Adrenal gland (tissue), 19 donors: ENCODE measurements at regions of chr14 and their contacts with region 1.

Region 1: GRCh38 chr14:60724137-60724619 is at the start of gene SIX4:
- DNase-seq: peak; percentile 62 to 80 (median 72)
- H3K4me3 ChIP-seq: peak within 1 kb of the TSS; percentile 70 to 86 (median 78)
- H3K27ac ChIP-seq: peak within 1 kb of the TSS in 3 of 5 donors; percentile 50 to 66 (median 61)
- H3K4me1 ChIP-seq: peaks cover 15 to 25% of the 10 kb centered on the region in 2 donors
- H3K27me3 ChIP-seq: no peaks in the 10 kb centered on the region
- CTCF ChIP-seq: no peak
- POLR2A ChIP-seq: peak in 1 of 2 donors; percentile 71
- total RNA-seq, gene SIX4: 0.98 to 3.9 (median 3.1) TPM

Region 2: DNA sequence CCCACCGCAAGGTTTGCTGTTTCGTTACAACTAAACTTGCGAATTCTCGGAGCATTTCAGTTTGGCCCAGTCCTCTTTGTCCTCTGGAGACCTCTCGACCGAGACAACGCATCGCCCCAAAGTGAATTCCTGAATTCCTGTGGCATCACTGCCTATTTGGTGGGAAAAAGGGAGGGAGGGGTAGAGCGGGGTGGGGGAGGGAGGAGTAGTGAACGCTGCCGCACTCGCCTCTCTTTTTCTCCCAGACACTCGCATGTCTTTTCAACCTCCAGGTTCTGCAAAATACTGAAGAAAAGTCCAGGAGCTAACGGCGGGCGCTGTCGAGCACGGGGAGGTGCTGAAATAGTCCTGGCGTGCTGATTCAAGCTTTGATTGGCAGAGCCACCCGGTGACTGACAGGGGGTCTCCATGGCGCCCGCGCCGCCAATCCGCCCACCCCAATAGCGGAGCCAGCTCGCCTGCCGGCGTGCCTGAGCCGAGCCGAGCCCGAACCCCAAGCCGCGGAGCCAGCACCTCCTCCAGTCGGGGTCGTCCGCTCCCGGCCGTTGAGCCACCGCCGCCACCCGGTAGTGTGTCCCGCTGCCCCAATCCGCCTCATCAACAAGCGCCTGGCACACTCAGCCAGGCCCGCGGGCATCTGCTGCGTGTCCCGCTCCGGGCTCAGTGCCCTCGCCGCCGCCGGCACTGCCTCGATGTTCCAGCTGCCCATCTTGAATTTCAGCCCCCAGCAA is 215.3 kb before region 1 on chr14 and contains the start of gene SIX6:
- intact Hi-C with region 1: no loop called
- DNase-seq: no peak
- H3K4me3 ChIP-seq: no peak within 1 kb of the TSS
- H3K27ac ChIP-seq: no peak within 1 kb of the TSS
- H3K4me1 ChIP-seq: peaks cover 0 to 15% of the 10 kb centered on the region in 2 donors
- H3K27me3 ChIP-seq: peaks cover 88% of the 10 kb centered on the region
- CTCF ChIP-seq: no peak
- POLR2A ChIP-seq: no peak
- total RNA-seq, gene SIX6: not detected

Region 3: DNA sequence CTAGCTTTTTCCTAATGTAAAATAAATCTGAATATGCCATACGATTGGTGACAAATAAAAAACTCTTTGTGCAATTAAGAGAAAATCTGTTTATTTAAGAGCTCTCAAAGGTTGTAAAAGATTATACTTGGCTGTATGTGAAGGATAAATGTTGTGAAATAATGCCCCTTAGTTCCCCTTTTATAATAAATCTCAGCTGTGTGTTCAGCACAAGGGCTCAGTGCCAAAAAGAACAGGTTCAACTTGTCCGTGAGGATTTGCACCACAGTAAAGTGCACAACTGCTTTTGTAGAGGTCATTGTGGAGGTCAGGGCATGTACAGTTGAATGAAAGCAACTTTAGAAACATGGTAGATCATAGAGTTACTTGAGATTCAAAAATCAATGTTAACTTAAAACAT is 138.1 kb after region 1 on chr14:
- intact Hi-C with region 1: loop called in 1 of 2 experiments (anchors 10 kb)
- DNase-seq: peak in 6 of 7 donors; percentile 26 to 74 (median 48)
- H3K4me3 ChIP-seq: no peak overlapping the region
- H3K27ac ChIP-seq: no peak overlapping the region
- H3K4me1 ChIP-seq: peaks cover 18 to 40% of the 10 kb centered on the region in 2 donors
- H3K27me3 ChIP-seq: no peaks in the 10 kb centered on the region
- CTCF ChIP-seq: no peak
- POLR2A ChIP-seq: no peak